CD8-positive, alpha-beta T cell (primary cell): ENCODE measurements at regions of chr5 and their contacts with region 1.

Region 1: GRCh38 chr5:158695595-158696330 is 404.0 kb downstream of the EBF1 start:
- DNase-seq: peak; percentile 21 to 83 (median 71)
- ATAC-seq: peak; percentile 78
- H3K4me3 ChIP-seq: no peak overlapping the region
- H3K4me3 Mint-ChIP-seq: no peak overlapping the region
- H3K27ac ChIP-seq: no peak overlapping the region
- H3K27ac Mint-ChIP-seq: no peak overlapping the region
- H3K4me1 ChIP-seq: no peaks in the 10 kb centered on the region
- H3K4me1 Mint-ChIP-seq: peaks cover 3% of the 10 kb centered on the region
- H3K27me3 ChIP-seq: peaks cover 0 to 2% of the 10 kb centered on the region in 2 experiments
- H3K27me3 Mint-ChIP-seq: peaks cover 3% of the 10 kb centered on the region
- CTCF ChIP-seq: peak; percentile 97

Region 2: GRCh38 chr5:157820593-157821252 is 875.0 kb before region 1 on chr5:
- CTCF ChIA-PET with region 1: no interaction called
- POLR2A ChIA-PET with region 1: no interaction called
- intact Hi-C with region 1: loop called in 1 of 2 experiments (anchors 10 kb)
- DNase-seq: peak in 3 of 9 experiments; percentile 15 to 62 (median 48)
- ATAC-seq: no peak
- H3K4me3 ChIP-seq: no peak overlapping the region
- H3K4me3 Mint-ChIP-seq: no peak overlapping the region
- H3K27ac ChIP-seq: no peak overlapping the region
- H3K27ac Mint-ChIP-seq: no peak overlapping the region
- H3K4me1 ChIP-seq: no peaks in the 10 kb centered on the region
- H3K4me1 Mint-ChIP-seq: peaks cover 34% of the 10 kb centered on the region
- H3K27me3 ChIP-seq: no peaks in the 10 kb centered on the region
- H3K27me3 Mint-ChIP-seq: no peaks in the 10 kb centered on the region
- CTCF ChIP-seq: peak; percentile 26

Region 3: DNA sequence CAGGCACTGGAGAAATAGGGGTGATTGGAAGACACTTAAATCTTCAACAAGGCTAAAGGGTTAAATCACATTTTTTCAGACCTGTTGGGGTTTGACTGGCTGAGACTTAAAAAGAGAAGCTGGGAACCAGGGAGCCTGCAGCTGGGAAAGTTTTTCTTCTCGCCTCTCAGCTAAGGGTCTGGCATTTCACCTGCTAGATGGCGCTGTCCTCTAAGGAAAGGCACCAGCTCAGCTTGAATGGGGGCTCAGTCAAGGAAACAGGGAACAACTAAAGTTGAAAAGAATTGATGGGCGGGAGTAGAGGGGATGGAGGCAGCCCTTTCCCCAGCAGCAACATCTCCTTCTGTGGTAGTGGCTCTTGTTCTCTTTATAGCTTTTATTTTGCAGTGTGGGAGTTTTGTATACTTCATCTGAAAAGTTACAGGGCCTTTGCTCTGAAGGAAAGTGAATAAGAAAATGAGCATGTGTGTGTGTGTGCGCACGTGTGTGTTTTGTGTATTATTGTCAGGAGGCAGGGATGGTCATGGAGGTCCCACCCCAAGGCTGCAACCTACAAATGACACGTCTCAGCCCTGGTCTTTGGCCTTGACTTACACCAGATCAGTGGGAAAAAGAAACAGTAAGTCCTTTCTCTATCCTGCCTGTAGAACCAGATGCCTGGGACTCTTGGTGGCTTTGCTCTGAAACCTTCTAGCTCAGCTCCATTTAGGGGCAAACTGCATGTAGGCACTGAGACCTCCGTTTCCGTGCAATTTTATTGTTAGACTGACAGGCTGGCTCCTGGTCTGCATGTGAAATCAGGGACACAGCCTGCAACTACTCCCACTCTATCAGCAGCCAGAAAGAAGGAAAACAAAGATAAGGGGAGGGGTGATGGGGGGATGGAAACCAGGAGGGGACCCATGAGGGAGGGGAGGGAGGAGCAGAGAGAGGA is 520.6 kb before region 1 on chr5:
- CTCF ChIA-PET with region 1: interaction called, 34 read pairs
- POLR2A ChIA-PET with region 1: no interaction called
- intact Hi-C with region 1: loop called (anchors 2 kb)
- DNase-seq: peak; percentile 10 to 66 (median 46)
- ATAC-seq: peak; percentile 44
- H3K4me3 ChIP-seq: no peak overlapping the region
- H3K4me3 Mint-ChIP-seq: no peak overlapping the region
- H3K27ac ChIP-seq: no peak overlapping the region
- H3K27ac Mint-ChIP-seq: no peak overlapping the region
- H3K4me1 ChIP-seq: no peaks in the 10 kb centered on the region
- H3K4me1 Mint-ChIP-seq: peaks cover 3% of the 10 kb centered on the region
- H3K27me3 ChIP-seq: no peaks in the 10 kb centered on the region
- H3K27me3 Mint-ChIP-seq: no peaks in the 10 kb centered on the region
- CTCF ChIP-seq: peak; percentile 56

Region 4: GRCh38 chr5:158953929-158954534 is 258.3 kb after region 1 on chr5:
- CTCF ChIA-PET with region 1: no interaction called
- POLR2A ChIA-PET with region 1: no interaction called
- intact Hi-C with region 1: loop called in 1 of 2 experiments (anchors 10 kb)
- DNase-seq: peak in 1 of 9 experiments; percentile 17
- ATAC-seq: no peak
- H3K4me3 ChIP-seq: no peak overlapping the region
- H3K4me3 Mint-ChIP-seq: no peak overlapping the region
- H3K27ac ChIP-seq: no peak overlapping the region
- H3K27ac Mint-ChIP-seq: no peak overlapping the region
- H3K4me1 ChIP-seq: peaks cover 10% of the 10 kb centered on the region
- H3K4me1 Mint-ChIP-seq: peaks cover 11% of the 10 kb centered on the region
- H3K27me3 ChIP-seq: no peaks in the 10 kb centered on the region
- H3K27me3 Mint-ChIP-seq: peaks cover 2% of the 10 kb centered on the region
- CTCF ChIP-seq: no peak

Region 5: GRCh38 chr5:159120446-159120845 is 424.7 kb after region 1 on chr5:
- CTCF ChIA-PET with region 1: interaction called, 19 read pairs
- POLR2A ChIA-PET with region 1: no interaction called
- intact Hi-C with region 1: no loop called
- DNase-seq: peak in 2 of 9 experiments; percentile 47 to 72
- ATAC-seq: peak; percentile 94
- H3K4me3 ChIP-seq: peak overlapping the region; percentile 31 to 37
- H3K4me3 Mint-ChIP-seq: peak overlapping the region; percentile 78
- H3K27ac ChIP-seq: peak overlapping the region; percentile 29 to 79
- H3K27ac Mint-ChIP-seq: peak overlapping the region; percentile 95
- H3K4me1 ChIP-seq: peaks cover 15% of the 10 kb centered on the region
- H3K4me1 Mint-ChIP-seq: peaks cover 22% of the 10 kb centered on the region
- H3K27me3 ChIP-seq: no peaks in the 10 kb centered on the region
- H3K27me3 Mint-ChIP-seq: no peaks in the 10 kb centered on the region
- CTCF ChIP-seq: no peak

Region 6: GRCh38 chr5:159316519-159317383 is 621.0 kb after region 1 on chr5:
- CTCF ChIA-PET with region 1: no interaction called
- POLR2A ChIA-PET with region 1: no interaction called
- intact Hi-C with region 1: loop called in 1 of 2 experiments (anchors 10 kb)
- DNase-seq: peak in 7 of 9 experiments; percentile 27 to 70 (median 44)
- ATAC-seq: peak; percentile 73
- H3K4me3 ChIP-seq: no peak overlapping the region
- H3K4me3 Mint-ChIP-seq: no peak overlapping the region
- H3K27ac ChIP-seq: no peak overlapping the region
- H3K27ac Mint-ChIP-seq: no peak overlapping the region
- H3K4me1 ChIP-seq: no peaks in the 10 kb centered on the region
- H3K4me1 Mint-ChIP-seq: no peaks in the 10 kb centered on the region
- H3K27me3 ChIP-seq: no peaks in the 10 kb centered on the region
- H3K27me3 Mint-ChIP-seq: peaks cover 7% of the 10 kb centered on the region
- CTCF ChIP-seq: peak; percentile 55